Caco-2 (cell line): ENCODE measurements at regions of chr7 and their contacts with region 1.

Region 1: GRCh38 chr7:139152149-139152548 is 42.6 kb upstream of the ZC3HAV1 start:
- DNase-seq: no peak
- H3K4me3 ChIP-seq: no peak overlapping the region
- H3K4me3 Mint-ChIP-seq: no peak overlapping the region
- H3K27ac Mint-ChIP-seq: no peak overlapping the region
- H3K4me1 ChIP-seq: no peaks in the 10 kb centered on the region
- H3K4me1 Mint-ChIP-seq: no peaks in the 10 kb centered on the region
- H3K27me3 ChIP-seq: no peaks in the 10 kb centered on the region
- H3K27me3 Mint-ChIP-seq: no peaks in the 10 kb centered on the region
- CTCF ChIP-seq: no peak

Region 2: DNA sequence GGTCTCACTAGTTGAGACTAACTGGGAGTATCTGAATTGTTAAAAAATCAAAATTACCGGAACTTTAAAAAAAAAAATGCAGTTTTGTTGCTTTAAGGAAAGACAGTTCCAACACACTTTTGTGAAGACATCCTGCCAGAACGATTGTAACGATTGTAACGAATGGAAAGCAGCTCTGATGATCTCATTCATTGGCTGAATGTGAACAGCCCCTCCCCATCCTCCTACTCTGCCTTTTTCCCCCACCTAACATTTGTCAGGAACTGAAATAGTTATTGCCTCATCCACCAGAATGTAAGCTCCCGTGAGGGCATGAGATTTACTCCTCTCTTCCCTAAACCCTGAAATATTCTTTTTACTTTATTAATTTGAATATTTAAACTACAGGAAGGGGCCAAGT is 93.2 kb before region 1 on chr7:
- CTCF ChIA-PET with region 1: no interaction called
- POLR2A ChIA-PET with region 1: no interaction called
- intact Hi-C with region 1: no loop called
- DNase-seq: no peak
- H3K4me3 ChIP-seq: no peak overlapping the region
- H3K4me3 Mint-ChIP-seq: no peak overlapping the region
- H3K27ac Mint-ChIP-seq: no peak overlapping the region
- H3K4me1 ChIP-seq: no peaks in the 10 kb centered on the region
- H3K4me1 Mint-ChIP-seq: no peaks in the 10 kb centered on the region
- H3K27me3 ChIP-seq: no peaks in the 10 kb centered on the region
- H3K27me3 Mint-ChIP-seq: no peaks in the 10 kb centered on the region
- CTCF ChIP-seq: no peak

Region 3: DNA sequence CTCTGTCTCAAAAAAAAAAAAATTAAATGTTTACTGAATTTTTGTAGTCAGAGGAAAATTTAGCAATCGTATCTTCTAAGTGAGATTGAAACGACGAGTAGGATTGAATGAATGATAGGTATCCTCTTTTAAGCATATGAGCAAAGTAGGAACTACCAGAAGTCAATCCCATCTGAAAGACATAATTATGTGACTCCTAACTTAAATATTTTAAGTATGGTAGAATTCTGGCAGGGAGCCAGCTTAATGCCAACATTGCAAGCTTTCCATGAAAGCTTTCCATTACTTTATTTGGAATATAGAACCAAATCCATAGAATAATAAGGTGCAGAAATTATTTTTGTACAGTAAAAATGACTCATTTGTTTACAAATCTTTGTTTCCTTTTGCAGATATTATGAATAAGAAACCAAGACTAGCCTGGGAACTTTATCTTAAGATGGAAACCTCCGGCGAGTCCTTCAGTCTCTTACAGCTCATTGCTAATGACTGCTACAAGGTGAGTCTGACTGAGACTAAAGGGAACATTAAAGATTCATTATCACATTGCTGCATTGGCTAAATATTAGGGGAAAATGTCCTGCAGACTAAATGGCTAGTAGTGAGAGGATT is 28.7 kb after region 1 on chr7:
- CTCF ChIA-PET with region 1: no interaction called
- POLR2A ChIA-PET with region 1: interaction called, 11 read pairs
- intact Hi-C with region 1: no loop called
- DNase-seq: no peak
- H3K4me3 ChIP-seq: no peak overlapping the region
- H3K4me3 Mint-ChIP-seq: no peak overlapping the region
- H3K27ac Mint-ChIP-seq: no peak overlapping the region
- H3K4me1 ChIP-seq: no peaks in the 10 kb centered on the region
- H3K4me1 Mint-ChIP-seq: no peaks in the 10 kb centered on the region
- H3K27me3 ChIP-seq: no peaks in the 10 kb centered on the region
- H3K27me3 Mint-ChIP-seq: no peaks in the 10 kb centered on the region
- CTCF ChIP-seq: no peak